Psoas muscle (tissue), 8 donors: ENCODE measurements at regions of chr5 and their contacts with region 1.

Region 1: GRCh38 chr5:173144200-173145176 is at the start of gene BNIP1:
- DNase-seq: peak; percentile 96 to 98
- ATAC-seq: peak; percentile 96 to 97 (median 97)
- H3K4me3 ChIP-seq: peak within 1 kb of the TSS; percentile 87
- H3K27ac ChIP-seq: peak within 1 kb of the TSS; percentile 87
- H3K4me1 ChIP-seq: no peaks in the 10 kb centered on the region
- H3K27me3 ChIP-seq: no peaks in the 10 kb centered on the region
- CTCF ChIP-seq: peak; percentile 91
- total RNA-seq, gene BNIP1: 8.4 to 15.1 (median 11.5) TPM

Region 2: GRCh38 chr5:173057062-173057924 is 87.2 kb before region 1 on chr5:
- intact Hi-C with region 1: loop called in 1 of 2 experiments (anchors 10 kb)
- DNase-seq: peak; percentile 99
- ATAC-seq: peak; percentile 94 to 96 (median 95)
- H3K4me3 ChIP-seq: peak overlapping the region; percentile 100
- H3K27ac ChIP-seq: peak overlapping the region; percentile 100
- H3K4me1 ChIP-seq: peaks cover 29% of the 10 kb centered on the region
- H3K27me3 ChIP-seq: no peaks in the 10 kb centered on the region
- CTCF ChIP-seq: no peak